ENCODE measurements at regions of chr6 and their contacts with region 1.

Region 1: DNA sequence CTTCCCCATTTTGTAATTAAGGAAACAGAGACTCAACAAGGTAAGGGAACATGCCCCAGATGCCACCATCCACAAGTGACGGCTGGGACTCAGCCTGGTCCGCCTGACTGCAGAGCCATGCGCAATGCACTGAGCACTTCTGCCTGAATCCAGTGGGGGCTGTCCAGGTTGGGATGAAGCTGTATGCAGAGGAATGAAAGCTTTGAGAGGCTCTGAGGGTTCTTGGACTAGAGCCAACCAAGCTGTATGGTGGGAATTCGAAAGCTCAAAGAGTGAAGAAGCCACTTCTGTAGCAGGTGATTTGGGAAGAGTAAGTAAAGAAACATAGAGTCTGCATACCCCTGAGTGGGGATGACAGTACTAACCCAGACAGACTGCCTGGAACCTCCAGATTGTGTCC is 127.6 kb upstream of the AKAP12 start:
- DNase-seq: no peak
- H3K4me3 ChIP-seq: no peak overlapping the region
- CTCF ChIP-seq: no peak

Region 2: GRCh38 chr6:151029970-151030369 is 82.2 kb before region 1 on chr6:
- in situ Hi-C with region 1: loop called (anchors 5 kb)
- DNase-seq: no peak
- H3K4me3 ChIP-seq: no peak overlapping the region
- CTCF ChIP-seq: no peak

Region 3: DNA sequence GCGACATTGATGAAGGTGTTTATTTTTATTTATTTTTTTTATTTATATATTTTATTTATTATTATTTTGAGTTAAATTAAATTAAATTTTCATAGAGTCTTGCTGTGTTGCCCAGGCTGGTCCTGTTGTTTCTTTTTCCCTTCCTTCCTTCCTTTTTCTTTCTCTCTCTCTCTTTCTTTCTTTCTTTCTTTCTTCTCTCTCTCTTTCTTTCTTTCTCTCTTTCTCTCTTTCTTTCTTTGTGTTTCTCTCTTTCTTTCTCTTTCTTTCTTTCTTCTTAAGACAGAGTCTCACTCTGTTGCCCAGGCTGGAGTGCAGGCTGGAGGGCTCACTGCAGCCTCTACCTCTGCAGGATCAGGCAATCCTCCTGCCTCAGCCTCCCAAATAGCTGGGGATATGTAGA is 43.0 kb after region 1 on chr6:
- in situ Hi-C with region 1: loop called (anchors 5 kb)
- DNase-seq: no peak
- H3K4me3 ChIP-seq: no peak overlapping the region
- CTCF ChIP-seq: no peak

Measured in astrocyte of the cerebellum (primary cell).